ENCODE measurements at regions of chr1 and their contacts with region 1.

Region 1: GRCh38 chr1:175146529-175147213 is 45.9 kb downstream of the KIAA0040 start:
- DNase-seq: peak; percentile 84
- ATAC-seq: peak; percentile 96
- H3K4me3 Mint-ChIP-seq: no peak overlapping the region
- H3K27ac Mint-ChIP-seq: no peak overlapping the region
- H3K4me1 Mint-ChIP-seq: peaks cover 2% of the 10 kb centered on the region
- H3K27me3 Mint-ChIP-seq: peaks cover 13% of the 10 kb centered on the region
- CTCF ChIP-seq: peak; percentile 86

Region 2: GRCh38 chr1:175023043-175023921 is 123.4 kb before region 1 on chr1 and contains the start of gene MRPS14:
- CTCF ChIA-PET with region 1: interaction called, 26 read pairs
- POLR2A ChIA-PET with region 1: no interaction called
- intact Hi-C with region 1: no loop called
- DNase-seq: peak; percentile 99
- ATAC-seq: peak; percentile 92
- H3K4me3 Mint-ChIP-seq: peak within 1 kb of the TSS; percentile 93
- H3K27ac Mint-ChIP-seq: peak within 1 kb of the TSS; percentile 93
- H3K4me1 Mint-ChIP-seq: peaks cover 30% of the 10 kb centered on the region
- H3K27me3 Mint-ChIP-seq: no peaks in the 10 kb centered on the region
- CTCF ChIP-seq: no peak
- total RNA-seq, gene MRPS14: 42.1 to 45.7 TPM

Region 3: DNA sequence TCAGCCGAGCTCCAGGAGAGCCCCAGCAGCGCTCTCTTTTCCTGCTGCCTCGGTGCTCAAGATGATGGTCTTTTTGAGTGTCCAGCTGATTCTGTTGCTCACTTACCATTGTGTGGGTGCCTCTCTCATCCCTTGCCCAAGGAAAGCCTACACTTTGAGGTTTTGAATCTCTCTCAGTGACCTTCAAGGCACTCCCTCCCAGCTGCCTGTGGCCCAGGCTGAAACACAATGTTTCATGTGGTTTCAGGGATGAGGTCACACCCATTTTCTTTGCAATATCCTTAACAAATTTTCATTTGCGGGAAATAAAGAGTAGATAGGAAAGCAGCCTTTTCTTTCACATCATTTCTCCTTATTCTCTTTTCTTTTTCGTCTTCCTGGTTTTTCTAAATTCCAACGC is 110.8 kb before region 1 on chr1:
- CTCF ChIA-PET with region 1: interaction called, 11 read pairs
- POLR2A ChIA-PET with region 1: interaction called, 3 read pairs
- intact Hi-C with region 1: no loop called
- DNase-seq: no peak
- ATAC-seq: no peak
- H3K4me3 Mint-ChIP-seq: no peak overlapping the region
- H3K27ac Mint-ChIP-seq: no peak overlapping the region
- H3K4me1 Mint-ChIP-seq: no peaks in the 10 kb centered on the region
- H3K27me3 Mint-ChIP-seq: no peaks in the 10 kb centered on the region
- CTCF ChIP-seq: no peak

Region 4: DNA sequence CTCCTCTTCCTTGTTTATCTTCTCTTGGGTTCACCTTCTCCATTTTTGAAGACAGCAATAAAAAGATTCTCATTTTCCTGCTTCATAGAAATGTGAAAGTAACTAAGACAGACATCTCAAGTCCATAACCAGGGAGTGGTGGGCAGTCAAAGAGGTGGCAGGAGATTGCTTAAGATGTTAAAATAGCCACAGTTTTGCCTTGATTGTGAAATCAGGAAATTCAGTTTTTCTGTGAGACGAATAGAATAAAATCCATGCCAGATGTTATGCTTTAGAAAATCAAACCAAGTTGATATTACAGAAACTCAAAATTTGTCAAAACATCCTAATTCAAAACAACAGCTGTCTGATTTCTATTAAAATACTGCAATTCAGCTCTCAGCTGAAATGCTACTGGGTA is 21.8 kb before region 1 on chr1:
- CTCF ChIA-PET with region 1: interaction called, 14 read pairs
- POLR2A ChIA-PET with region 1: no interaction called
- intact Hi-C with region 1: no loop called
- DNase-seq: no peak
- ATAC-seq: no peak
- H3K4me3 Mint-ChIP-seq: no peak overlapping the region
- H3K27ac Mint-ChIP-seq: no peak overlapping the region
- H3K4me1 Mint-ChIP-seq: no peaks in the 10 kb centered on the region
- H3K27me3 Mint-ChIP-seq: no peaks in the 10 kb centered on the region
- CTCF ChIP-seq: no peak

Region 5: GRCh38 chr1:175129997-175130648 is 16.5 kb before region 1 on chr1:
- CTCF ChIA-PET with region 1: interaction called, 17 read pairs
- POLR2A ChIA-PET with region 1: no interaction called
- intact Hi-C with region 1: no loop called
- DNase-seq: no peak
- ATAC-seq: no peak
- H3K4me3 Mint-ChIP-seq: no peak overlapping the region
- H3K27ac Mint-ChIP-seq: no peak overlapping the region
- H3K4me1 Mint-ChIP-seq: no peaks in the 10 kb centered on the region
- H3K27me3 Mint-ChIP-seq: peaks cover 9% of the 10 kb centered on the region
- CTCF ChIP-seq: no peak

Region 6: DNA sequence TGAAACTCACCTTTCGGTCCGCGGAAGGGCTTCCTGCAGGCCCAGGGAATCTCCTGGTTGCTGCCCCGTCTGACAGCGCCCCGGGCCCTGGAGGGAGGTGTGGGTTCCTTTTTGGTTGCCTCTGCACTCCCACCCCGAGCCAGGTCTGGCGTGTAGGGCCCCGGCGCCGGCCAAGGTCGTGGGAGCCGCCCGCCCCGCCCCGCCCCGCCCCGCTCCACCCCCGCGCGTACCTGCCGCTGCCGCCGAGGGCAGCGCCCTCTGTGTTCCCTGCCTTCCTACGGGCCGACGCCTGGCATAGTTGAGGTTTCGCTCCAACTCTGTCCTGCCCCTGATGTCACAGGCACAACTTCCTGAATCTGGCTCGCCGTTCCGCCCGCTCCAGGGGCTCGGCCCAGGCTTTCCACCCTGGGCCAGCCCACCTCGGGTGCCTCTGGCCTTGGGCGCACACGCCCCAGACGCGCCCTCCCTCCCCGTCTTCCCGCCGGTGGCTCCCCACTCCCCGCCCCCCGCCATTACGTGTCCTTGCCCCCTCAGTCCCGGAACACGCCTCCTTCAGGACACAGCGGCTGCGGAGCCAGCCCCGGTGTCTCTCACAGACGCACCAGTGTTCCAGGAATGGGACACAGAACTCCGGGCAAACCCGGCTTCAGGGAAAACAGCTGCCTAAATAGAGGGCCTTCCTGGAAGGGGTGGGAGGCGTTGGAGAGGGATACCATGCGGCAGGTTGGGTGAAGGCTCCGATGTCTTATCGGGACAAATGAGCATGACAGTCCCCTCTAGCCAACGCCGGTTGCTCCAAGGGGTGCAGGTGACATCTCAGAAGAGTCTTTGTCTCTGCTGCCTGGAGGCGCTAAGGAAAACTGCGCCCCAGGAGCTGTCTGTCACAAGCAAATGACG is 46.2 kb after region 1 on chr1 and contains the start of gene KIAA0040:
- CTCF ChIA-PET with region 1: interaction called, 40 read pairs
- POLR2A ChIA-PET with region 1: interaction called, 3 read pairs
- intact Hi-C with region 1: no loop called
- DNase-seq: peak; percentile 66
- ATAC-seq: peak; percentile 64
- H3K4me3 Mint-ChIP-seq: peak within 1 kb of the TSS; percentile 96
- H3K27ac Mint-ChIP-seq: peak within 1 kb of the TSS; percentile 92
- H3K4me1 Mint-ChIP-seq: peaks cover 46% of the 10 kb centered on the region
- H3K27me3 Mint-ChIP-seq: no peaks in the 10 kb centered on the region
- CTCF ChIP-seq: no peak
- total RNA-seq, gene KIAA0040: 20.8 to 21.1 TPM

Region 7: DNA sequence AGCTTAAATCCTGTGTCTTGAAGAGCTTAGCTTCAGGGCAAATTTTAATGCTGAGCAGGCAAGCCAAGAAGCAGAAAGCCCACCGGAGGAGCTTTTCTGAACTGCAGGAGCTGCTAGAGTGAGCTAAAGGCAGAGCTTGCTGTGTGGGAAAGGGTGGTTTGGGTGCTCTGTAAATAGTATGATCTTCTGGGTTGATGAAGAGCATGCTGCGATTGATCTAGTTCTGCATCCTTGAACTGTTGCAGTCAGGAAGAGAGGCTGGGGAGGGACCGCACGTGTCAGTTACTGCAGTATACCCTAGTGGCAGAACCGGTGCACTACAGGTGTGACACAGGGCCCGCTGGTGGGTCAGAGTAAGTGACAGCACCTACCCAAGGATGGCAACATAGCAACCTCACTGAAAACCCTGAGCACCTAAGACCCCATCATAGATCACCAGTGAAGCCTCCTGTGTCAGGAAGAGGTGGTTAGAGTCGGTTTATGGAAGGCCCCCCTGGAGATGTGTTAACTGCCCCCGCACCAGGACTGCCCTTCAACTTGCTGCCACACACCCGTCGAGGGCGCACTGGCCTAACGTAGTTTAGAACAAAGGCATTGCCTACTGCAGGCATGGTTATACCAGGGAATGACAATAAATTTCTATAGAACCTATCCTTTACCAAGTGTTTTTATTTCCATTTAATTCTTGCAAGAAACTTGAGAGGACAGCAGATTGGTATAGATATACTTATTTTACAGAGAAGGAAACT is 191.9 kb after region 1 on chr1:
- CTCF ChIA-PET with region 1: interaction called, 50 read pairs
- POLR2A ChIA-PET with region 1: no interaction called
- intact Hi-C with region 1: no loop called
- DNase-seq: peak; percentile 79
- ATAC-seq: peak; percentile 100
- H3K4me3 Mint-ChIP-seq: no peak overlapping the region
- H3K27ac Mint-ChIP-seq: no peak overlapping the region
- H3K4me1 Mint-ChIP-seq: peaks cover 4% of the 10 kb centered on the region
- H3K27me3 Mint-ChIP-seq: peaks cover 16% of the 10 kb centered on the region
- CTCF ChIP-seq: peak; percentile 80